SK-N-SH (cell line): ENCODE measurements at regions of chr4 and their contacts with region 1.

Region 1: DNA sequence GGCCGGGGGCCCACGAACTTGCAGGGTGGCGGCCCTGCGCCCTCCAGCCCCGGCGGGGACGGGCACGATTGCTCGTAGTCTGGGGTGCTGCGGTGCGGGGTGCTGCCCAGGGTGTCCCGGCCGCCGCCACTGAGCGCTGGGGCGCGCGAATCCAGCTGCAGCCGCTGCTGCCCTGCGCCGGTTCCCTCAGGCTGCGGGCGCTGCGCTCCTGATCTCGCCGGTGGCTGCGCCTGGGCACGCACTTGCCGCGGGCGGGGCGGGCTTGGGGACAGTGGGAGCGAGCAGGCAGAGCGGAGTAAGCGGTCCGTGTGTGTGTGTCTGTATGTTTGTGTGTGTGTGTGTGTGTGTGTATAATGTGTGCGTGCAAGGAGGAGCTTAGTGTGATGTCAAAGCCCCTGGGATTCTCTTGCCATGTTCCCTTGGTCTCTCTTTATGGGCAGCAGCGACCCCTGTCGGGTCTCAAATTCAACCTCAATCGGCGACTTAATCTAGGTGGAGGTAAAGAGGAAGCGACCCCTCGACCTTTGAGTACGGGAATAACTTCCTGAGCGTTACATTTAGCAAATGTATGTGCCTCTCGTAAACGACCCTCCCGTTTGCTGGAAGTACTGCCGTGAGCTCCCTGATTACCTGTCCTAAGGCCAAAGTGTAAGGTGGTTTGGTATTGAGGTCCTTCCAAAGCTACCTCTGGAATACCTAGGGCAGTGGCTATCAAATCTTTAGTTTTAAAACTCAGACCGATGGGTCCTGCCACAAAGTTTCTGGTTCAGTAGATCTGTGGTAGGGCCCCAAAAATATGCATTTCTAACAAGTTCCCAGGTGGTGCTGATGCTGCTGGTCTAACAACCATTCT is at the start of gene RNF150:
- DNase-seq: peak; percentile 87
- H3K4me3 ChIP-seq: peak within 1 kb of the TSS; percentile 80 to 97
- H3K27ac ChIP-seq: peak within 1 kb of the TSS; percentile 53 to 95
- H3K4me1 ChIP-seq: peaks cover 0 to 16% of the 10 kb centered on the region in 2 experiments; a peak in 2 of 4 replicates
- H3K27me3 ChIP-seq: no peaks in the 10 kb centered on the region
- CTCF ChIP-seq: peak; percentile 91
- EP300 ChIP-seq: 0 out of 4 replicates have a peak, but pooled peaks of 1 of the 2 experiments have one; percentile 16
- RAD21 ChIP-seq: peak; percentile 98
- polyA plus RNA-seq, gene RNF150: 5.8 and 8.8 TPM in 2 replicates

Region 2: DNA sequence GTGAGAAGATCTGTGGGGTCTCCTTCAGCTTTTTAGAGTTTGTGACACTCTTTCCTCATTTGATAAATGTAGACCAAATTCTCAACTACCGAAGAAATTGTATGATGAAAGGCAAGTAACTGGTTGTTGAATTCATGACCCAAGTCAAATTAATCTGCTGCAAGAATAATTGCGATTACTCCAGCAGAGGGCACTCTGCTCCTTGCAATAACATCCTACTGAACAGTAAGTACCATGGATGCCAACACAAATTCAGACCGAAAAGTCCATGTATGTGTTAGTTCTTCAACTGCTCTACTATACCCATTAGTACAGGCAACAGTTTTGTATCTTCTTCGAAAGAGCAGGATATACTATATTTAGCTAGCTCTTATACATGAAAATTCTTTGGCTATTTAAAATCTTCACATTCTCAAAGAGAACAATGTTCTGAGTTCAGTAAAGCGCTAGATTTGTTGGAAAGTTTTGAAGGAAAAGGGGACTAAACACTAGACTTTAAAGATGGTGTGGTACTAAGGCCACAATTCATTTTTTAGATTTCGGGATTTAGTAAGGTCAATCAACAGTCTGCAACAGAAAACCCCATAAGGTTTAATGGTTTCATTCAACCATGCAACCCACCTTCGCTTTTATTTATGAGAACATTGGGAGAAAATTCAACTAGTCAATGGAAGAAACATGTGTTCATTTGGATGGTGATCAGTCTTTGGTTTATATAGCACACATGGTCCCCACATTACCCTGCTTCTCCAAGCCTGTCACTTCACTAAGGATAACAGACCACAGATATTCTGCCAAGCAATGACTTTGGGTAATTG is 271.8 kb before region 1 on chr4:
- CTCF ChIA-PET with region 1: interaction called, 217 read pairs
- POLR2A ChIA-PET with region 1: interaction called, 17 read pairs
- DNase-seq: peak; percentile 47
- H3K4me3 ChIP-seq: no peak overlapping the region
- H3K27ac ChIP-seq: peak overlapping the region in 1 of 2 experiments; percentile 67; a peak in 2 of 4 replicates
- H3K4me1 ChIP-seq: peaks cover 0 to 30% of the 10 kb centered on the region in 2 experiments; a peak in 2 of 4 replicates
- H3K27me3 ChIP-seq: no peaks in the 10 kb centered on the region
- CTCF ChIP-seq: peak; percentile 86
- EP300 ChIP-seq: no peak
- RAD21 ChIP-seq: peak; percentile 99

Region 3: GRCh38 chr4:140903522-140904475 is 229.6 kb before region 1 on chr4:
- CTCF ChIA-PET with region 1: interaction called, 72 read pairs
- POLR2A ChIA-PET with region 1: interaction called, 41 read pairs
- DNase-seq: peak; percentile 44
- H3K4me3 ChIP-seq: no peak overlapping the region
- H3K27ac ChIP-seq: peak overlapping the region in 1 of 2 experiments; percentile 99; a peak in 3 of 4 replicates
- H3K4me1 ChIP-seq: peaks cover 20 to 69% of the 10 kb centered on the region in 2 experiments; a peak in 3 of 4 replicates
- H3K27me3 ChIP-seq: no peaks in the 10 kb centered on the region
- CTCF ChIP-seq: no peak
- EP300 ChIP-seq: peak in 1 of 2 experiments; percentile 84; a peak in 3 of 4 replicates
- RAD21 ChIP-seq: peak; percentile 51

Region 4: GRCh38 chr4:140947507-140947906 is 185.9 kb before region 1 on chr4:
- CTCF ChIA-PET with region 1: interaction called, 11 read pairs
- POLR2A ChIA-PET with region 1: interaction called, 4 read pairs
- DNase-seq: peak; percentile 22
- H3K4me3 ChIP-seq: no peak overlapping the region
- H3K27ac ChIP-seq: peak overlapping the region; percentile 87 to 91
- H3K4me1 ChIP-seq: peaks cover 22 to 37% of the 10 kb centered on the region in 2 experiments
- H3K27me3 ChIP-seq: no peaks in the 10 kb centered on the region
- CTCF ChIP-seq: no peak
- EP300 ChIP-seq: peak in 1 of 2 experiments; percentile 54; a peak in 1 of 4 replicates
- RAD21 ChIP-seq: no peak

Region 5: GRCh38 chr4:141020801-141021261 is 112.5 kb before region 1 on chr4:
- CTCF ChIA-PET with region 1: interaction called, 58 read pairs
- POLR2A ChIA-PET with region 1: interaction called, 20 read pairs
- DNase-seq: no peak
- H3K4me3 ChIP-seq: peak overlapping the region in 1 of 2 experiments; percentile 9; a peak in 1 of 4 replicates
- H3K27ac ChIP-seq: peak overlapping the region; percentile 84 to 100
- H3K4me1 ChIP-seq: peaks cover 28 to 65% of the 10 kb centered on the region in 2 experiments
- H3K27me3 ChIP-seq: no peaks in the 10 kb centered on the region
- CTCF ChIP-seq: no peak
- EP300 ChIP-seq: peak; percentile 68 to 74
- RAD21 ChIP-seq: no peak

Region 6: GRCh38 chr4:141121768-141122454 is 11.5 kb before region 1 on chr4:
- CTCF ChIA-PET with region 1: interaction called, 13 read pairs
- POLR2A ChIA-PET with region 1: interaction called, 3 read pairs
- DNase-seq: no peak
- H3K4me3 ChIP-seq: no peak overlapping the region
- H3K27ac ChIP-seq: no peak overlapping the region; a peak in 1 of 4 replicates
- H3K4me1 ChIP-seq: peaks cover 12 to 33% of the 10 kb centered on the region in 2 experiments; a peak in 3 of 4 replicates
- H3K27me3 ChIP-seq: no peaks in the 10 kb centered on the region
- CTCF ChIP-seq: no peak
- EP300 ChIP-seq: no peak
- RAD21 ChIP-seq: no peak

Region 7: GRCh38 chr4:141180991-141181761 is 47.8 kb after region 1 on chr4:
- CTCF ChIA-PET with region 1: no interaction called
- POLR2A ChIA-PET with region 1: no interaction called
- DNase-seq: no peak
- H3K4me3 ChIP-seq: no peak overlapping the region
- H3K27ac ChIP-seq: no peak overlapping the region
- H3K4me1 ChIP-seq: peaks cover 0 to 5% of the 10 kb centered on the region in 2 experiments; a peak in 2 of 4 replicates
- H3K27me3 ChIP-seq: no peaks in the 10 kb centered on the region
- CTCF ChIP-seq: no peak
- EP300 ChIP-seq: no peak
- RAD21 ChIP-seq: no peak

Region 8: GRCh38 chr4:141371206-141371605 is 237.8 kb after region 1 on chr4:
- CTCF ChIA-PET with region 1: no interaction called
- POLR2A ChIA-PET with region 1: no interaction called
- DNase-seq: no peak
- H3K4me3 ChIP-seq: no peak overlapping the region
- H3K27ac ChIP-seq: no peak overlapping the region
- H3K4me1 ChIP-seq: no peaks in the 10 kb centered on the region
- H3K27me3 ChIP-seq: no peaks in the 10 kb centered on the region
- CTCF ChIP-seq: no peak
- EP300 ChIP-seq: no peak
- RAD21 ChIP-seq: no peak